Activated CD4-positive, alpha-beta T cell treated with anti-CD3 and anti-CD28 coated beads for 36 hours (primary cell): ENCODE measurements at regions of chr11 and their contacts with region 1.

Region 1: DNA sequence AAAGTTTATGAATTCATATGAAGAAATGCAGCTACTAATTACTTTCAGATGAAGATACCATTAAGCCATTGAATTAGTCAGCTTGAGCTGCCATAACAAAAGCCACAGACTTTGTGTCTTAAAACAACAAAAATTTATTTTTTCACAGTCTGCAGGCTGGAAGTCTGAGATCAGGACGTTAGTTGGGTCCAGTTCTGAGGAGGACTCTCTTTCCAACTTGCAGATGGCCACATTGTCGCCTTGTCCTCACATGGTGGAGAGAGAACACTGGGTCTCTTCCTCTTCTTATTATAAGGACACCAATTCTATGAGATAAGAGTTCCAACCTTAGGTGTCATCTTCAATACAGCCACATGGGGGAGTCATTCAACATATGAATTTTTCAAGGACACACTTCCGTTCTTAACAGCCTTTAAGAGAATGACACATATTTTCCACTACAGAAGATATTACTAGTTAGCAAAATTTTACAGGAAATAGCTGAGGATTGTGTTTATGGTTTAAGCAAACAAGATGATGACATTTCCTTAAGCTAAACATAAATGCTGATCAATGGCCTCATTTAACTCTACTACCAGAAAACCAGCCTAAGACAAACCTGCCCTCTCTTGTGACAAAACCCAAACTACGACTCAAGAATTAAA is 56.0 kb downstream of the DCUN1D5 start:
- DNase-seq: peak; percentile 51
- ATAC-seq: peak; percentile 88
- H3K4me3 Mint-ChIP-seq: peak overlapping the region; percentile 50
- H3K27ac Mint-ChIP-seq: peak overlapping the region; percentile 96
- H3K4me1 Mint-ChIP-seq: peaks cover 25% of the 10 kb centered on the region
- H3K27me3 Mint-ChIP-seq: no peaks in the 10 kb centered on the region

Region 2: GRCh38 chr11:102317099-102317767 is 718.7 kb before region 1 on chr11 and contains the start of gene BIRC3:
- CTCF ChIA-PET with region 1: no interaction called
- POLR2A ChIA-PET with region 1: no interaction called
- intact Hi-C with region 1: loop called in 1 of 2 experiments (anchors 5 kb)
- DNase-seq: peak; percentile 95
- ATAC-seq: peak; percentile 85
- H3K4me3 Mint-ChIP-seq: peak within 1 kb of the TSS; percentile 96
- H3K27ac Mint-ChIP-seq: peak within 1 kb of the TSS; percentile 99
- H3K4me1 Mint-ChIP-seq: peaks cover 68% of the 10 kb centered on the region
- H3K27me3 Mint-ChIP-seq: no peaks in the 10 kb centered on the region
- total RNA-seq, gene BIRC3: 99.2 to 109 TPM

Region 3: DNA sequence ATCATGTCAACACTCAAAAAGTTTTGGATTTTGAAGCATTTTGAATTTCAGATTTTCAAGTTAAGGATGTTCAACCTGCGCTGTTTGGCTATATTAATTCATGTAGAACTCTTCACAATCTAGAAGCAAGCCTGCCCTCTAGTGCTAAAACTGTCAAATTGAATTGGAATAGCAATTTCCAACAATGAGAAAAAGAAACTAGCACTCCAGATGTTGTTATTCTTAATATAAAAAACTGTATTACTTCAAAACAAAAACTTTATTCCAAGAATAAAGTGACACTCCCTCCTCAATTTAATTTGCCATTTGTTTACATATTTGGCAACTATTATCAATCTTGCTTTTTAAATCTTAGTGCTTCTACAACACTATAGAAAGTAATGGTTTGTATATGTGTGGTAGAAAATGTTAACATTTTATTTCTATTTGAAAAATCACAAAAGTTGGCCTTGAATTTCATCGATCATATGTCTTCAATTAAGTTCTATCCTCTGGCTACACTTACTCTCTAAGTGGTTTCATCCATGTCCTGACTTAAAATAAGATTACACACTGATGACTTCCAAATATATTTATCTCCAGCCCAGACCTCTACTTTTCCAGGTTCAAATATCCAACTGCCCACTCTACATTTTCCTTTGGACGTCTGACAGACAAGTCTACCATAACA is 19.4 kb after region 1 on chr11:
- CTCF ChIA-PET with region 1: interaction called, 7 read pairs
- POLR2A ChIA-PET with region 1: no interaction called
- intact Hi-C with region 1: loop called (anchors 1 kb)
- DNase-seq: no peak
- ATAC-seq: peak; percentile 61
- H3K4me3 Mint-ChIP-seq: no peak overlapping the region
- H3K27ac Mint-ChIP-seq: no peak overlapping the region
- H3K4me1 Mint-ChIP-seq: peaks cover 5% of the 10 kb centered on the region
- H3K27me3 Mint-ChIP-seq: no peaks in the 10 kb centered on the region

Region 4: DNA sequence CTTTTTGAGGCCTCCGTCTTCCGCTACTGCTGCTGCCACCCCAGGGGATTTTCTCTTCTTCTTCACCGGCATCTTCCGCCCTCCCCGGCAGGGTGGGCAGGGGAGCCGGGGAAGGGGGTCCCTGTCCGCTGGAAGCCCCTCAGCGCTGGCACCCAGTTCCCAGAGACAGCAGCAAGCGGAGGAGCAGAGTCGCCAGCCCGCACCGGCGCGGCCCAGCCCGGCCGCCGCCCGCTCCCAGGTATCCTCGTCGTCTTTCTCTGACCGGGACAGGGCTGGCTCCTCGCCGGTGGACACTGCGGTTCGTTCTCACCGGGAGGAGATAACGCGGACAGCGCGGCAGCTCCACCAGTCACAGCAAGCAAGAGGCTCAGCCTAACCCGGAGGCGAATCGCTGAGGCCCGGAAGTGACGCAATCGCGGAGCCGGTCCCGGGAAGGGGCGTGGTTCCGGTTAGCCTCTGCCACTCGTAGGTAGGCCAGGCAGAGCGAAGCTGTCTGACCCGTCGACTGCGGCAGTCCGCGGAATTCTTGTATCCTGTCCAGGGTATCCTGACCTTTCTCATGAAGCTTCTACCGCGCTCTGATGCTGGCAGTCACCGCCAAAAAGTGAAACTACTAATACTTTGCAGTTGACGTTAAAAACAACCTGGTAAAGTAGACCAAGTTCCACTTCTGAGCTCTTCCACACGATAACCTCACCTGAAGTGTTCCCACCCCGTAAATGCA is 56.0 kb after region 1 on chr11 and contains the start of gene DCUN1D5:
- CTCF ChIA-PET with region 1: interaction called, 3 read pairs
- POLR2A ChIA-PET with region 1: no interaction called
- intact Hi-C with region 1: loop called (anchors 2 to 5 kb)
- DNase-seq: peak; percentile 97
- ATAC-seq: peak; percentile 94
- H3K4me3 Mint-ChIP-seq: peak within 1 kb of the TSS; percentile 86
- H3K27ac Mint-ChIP-seq: peak within 1 kb of the TSS; percentile 86
- H3K4me1 Mint-ChIP-seq: peaks cover 25% of the 10 kb centered on the region
- H3K27me3 Mint-ChIP-seq: peaks cover 9% of the 10 kb centered on the region
- total RNA-seq, gene DCUN1D5: 59.2 to 78.1 TPM

Region 5: GRCh38 chr11:103108933-103109817 is 73.3 kb after region 1 on chr11 and contains the start of gene DYNC2H1:
- CTCF ChIA-PET with region 1: interaction called, 8 read pairs
- POLR2A ChIA-PET with region 1: no interaction called
- intact Hi-C with region 1: loop called in 1 of 2 experiments (anchors 1 kb)
- DNase-seq: peak; percentile 93
- ATAC-seq: peak; percentile 96
- H3K4me3 Mint-ChIP-seq: peak within 1 kb of the TSS; percentile 84
- H3K27ac Mint-ChIP-seq: peak within 1 kb of the TSS; percentile 68
- H3K4me1 Mint-ChIP-seq: peaks cover 11% of the 10 kb centered on the region
- H3K27me3 Mint-ChIP-seq: peaks cover 5% of the 10 kb centered on the region
- total RNA-seq, gene DYNC2H1: 1.4 to 1.9 TPM

Region 6: DNA sequence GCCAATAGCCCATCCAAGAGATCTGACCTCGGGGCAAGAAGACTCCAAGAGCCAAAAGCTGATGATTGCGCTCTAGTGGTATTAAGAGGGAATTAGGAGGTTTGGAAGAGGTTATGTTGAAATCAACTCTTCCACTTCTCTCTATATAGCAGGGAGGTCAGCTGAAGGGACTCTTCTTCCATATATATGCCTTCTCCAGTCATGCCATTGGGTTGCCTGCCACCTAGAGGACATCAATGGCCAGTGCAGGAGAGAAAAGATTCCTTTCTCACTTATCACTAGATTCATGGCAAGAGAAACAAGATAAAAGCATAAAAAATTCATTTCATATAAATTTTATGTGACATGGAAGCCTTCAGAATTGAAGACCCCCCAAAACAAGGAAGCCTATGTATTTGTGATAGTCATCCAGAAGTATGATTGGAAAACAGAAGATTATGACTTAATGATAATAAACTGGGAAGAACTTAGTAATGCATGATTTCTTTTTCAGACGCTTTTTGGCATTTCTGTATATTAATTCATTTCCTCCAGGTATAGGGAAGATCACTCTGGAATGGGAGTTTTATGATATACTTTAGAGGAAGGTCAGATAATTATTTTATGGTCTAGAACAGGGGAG is 565.4 kb after region 1 on chr11:
- CTCF ChIA-PET with region 1: no interaction called
- POLR2A ChIA-PET with region 1: no interaction called
- intact Hi-C with region 1: loop called (anchors 5 kb)
- DNase-seq: peak; percentile 49
- ATAC-seq: peak; percentile 63
- H3K4me3 Mint-ChIP-seq: no peak overlapping the region
- H3K27ac Mint-ChIP-seq: no peak overlapping the region
- H3K4me1 Mint-ChIP-seq: no peaks in the 10 kb centered on the region
- H3K27me3 Mint-ChIP-seq: peaks cover 16% of the 10 kb centered on the region